Left colon (tissue), 2 donors: ENCODE measurements at regions of chr15 and their contacts with region 1.

Region 1: GRCh38 chr15:90648137-90649070 is 68.7 kb upstream of the BLM start:
- DNase-seq: peak; percentile 66 to 77
- ATAC-seq: peak; percentile 65

Region 2: DNA sequence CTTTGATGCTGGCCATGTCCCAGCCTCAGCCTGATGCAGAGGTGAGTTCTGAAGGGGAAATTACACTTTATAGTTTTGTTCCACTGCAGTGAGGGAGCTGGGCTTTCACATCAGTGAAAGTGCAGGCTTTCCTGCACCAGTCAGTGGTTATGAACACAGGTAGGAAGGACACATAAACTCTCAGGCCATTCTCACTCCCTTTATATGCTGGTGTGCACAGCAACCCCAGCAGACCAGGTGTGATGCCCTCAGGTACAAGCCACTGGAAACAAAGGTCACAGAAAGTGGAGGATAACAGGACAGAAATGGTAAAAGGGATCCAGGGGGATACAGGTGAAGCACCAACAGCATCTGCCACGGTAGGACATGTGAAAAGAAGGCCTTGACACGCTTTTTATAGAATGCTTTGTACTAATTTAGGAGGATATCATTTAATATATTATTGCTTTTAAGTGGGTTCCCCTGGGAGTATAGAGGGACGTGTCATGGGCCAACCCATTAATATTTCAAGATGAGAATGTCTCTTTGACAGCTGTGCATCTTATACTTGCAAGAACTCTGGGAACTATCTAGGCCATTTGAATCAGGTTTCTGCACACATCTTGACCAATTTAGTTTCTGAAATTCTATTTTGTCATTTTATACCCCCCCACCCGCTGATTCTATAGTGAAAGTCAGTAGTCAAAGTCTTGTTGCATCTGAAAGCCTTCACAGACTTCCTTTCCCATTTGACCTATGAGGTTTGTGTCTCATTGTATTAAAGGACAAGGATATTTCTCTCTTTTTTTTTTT is 43.8 kb after region 1 on chr15:
- intact Hi-C with region 1: loop called in 1 of 2 experiments (anchors 10 kb)
- DNase-seq: no peak
- ATAC-seq: no peak

Region 3: DNA sequence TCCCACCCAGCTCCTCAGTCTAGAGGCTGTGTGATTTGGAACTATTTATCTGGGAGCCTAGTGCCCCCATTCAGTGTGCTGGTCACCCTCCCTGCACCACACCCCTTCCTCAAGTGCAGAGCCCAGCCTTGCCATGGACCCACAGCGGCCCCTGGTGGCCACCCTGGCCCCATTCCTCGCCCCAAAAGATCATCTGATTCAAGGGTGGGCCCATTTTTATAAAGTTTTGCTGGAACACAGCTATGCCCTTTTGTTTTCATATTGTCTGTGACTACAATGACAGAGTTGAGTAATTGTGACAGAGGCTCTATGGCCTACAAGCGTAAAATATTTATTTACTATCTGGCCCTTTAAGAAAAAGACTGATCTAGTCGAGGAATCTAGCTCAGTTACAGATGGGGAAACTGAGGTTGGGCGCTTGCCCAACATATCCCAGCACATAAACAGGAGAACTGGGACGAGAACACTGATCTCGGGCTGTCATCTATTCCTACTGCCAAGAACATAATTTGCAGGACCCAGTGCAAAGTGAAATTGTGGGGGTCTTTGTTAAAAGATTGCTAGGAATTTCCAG is 237.7 kb after region 1 on chr15:
- intact Hi-C with region 1: loop called (anchors 2 to 5 kb)
- DNase-seq: peak; percentile 57 to 82
- ATAC-seq: peak; percentile 60